AG04449 (cell line): ENCODE measurements at regions of chr2 and their contacts with region 1.

Region 1: GRCh38 chr2:234544659-234545611 is 48.1 kb upstream of the ARL4C start:
- DNase-seq: no peak
- H3K4me3 ChIP-seq: no peak overlapping the region
- CTCF ChIP-seq: peak; percentile 92

Region 2: GRCh38 chr2:233966388-233966787 is 578.5 kb before region 1 on chr2:
- CTCF ChIA-PET with region 1: interaction called, 164 read pairs
- POLR2A ChIA-PET with region 1: no interaction called
- DNase-seq: no peak
- H3K4me3 ChIP-seq: no peak overlapping the region
- CTCF ChIP-seq: no peak

Region 3: DNA sequence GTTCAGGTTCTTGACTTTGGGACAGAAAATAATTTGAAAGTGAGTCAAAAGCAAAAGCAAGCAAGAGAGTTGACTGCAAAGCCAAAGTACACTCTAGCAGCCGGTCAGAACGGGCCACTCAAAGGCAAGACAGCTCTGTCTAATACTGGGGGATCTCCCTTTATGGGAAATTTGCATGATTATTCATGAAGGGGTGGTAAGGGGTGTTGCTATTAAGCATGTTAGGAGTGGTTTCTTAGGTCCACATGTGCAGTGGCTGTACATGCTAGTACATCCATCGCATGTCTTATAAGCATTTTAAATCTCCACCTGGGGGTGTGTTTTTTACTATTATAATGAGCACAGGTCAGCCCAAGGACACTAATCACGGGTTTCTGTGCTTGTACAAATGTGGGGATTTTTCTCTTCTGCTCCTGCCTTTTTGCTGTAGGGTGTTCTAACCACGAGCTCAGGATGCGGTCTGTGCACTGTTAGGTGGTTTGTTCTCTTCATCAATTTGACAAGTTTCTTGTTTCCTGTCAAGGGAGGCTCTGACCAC is 554.6 kb before region 1 on chr2:
- CTCF ChIA-PET with region 1: interaction called, 58 read pairs
- POLR2A ChIA-PET with region 1: no interaction called
- DNase-seq: no peak
- H3K4me3 ChIP-seq: no peak overlapping the region
- CTCF ChIP-seq: no peak

Region 4: DNA sequence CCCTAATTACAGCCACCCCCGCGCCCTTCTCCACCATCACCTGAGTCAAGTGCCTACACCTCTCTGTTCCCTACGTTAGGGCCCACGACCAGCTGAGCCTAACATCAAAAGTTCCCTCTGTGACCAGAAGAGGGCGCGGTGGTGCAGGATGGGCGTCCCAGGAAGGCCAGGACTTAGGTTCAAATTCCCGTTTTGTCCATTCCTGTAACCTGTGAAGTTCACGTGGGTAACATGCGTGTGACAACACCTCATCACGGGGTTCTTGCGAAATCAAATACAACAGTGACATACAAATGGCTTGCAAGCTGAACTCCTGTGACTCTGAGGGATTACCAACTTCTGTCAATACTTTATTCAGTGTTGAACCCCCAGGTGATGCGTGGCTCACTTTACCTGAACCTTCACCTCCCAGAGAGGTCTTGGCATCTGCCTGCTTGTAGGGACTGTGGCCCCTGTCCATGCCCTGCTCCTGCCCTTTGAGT is 255.9 kb before region 1 on chr2:
- CTCF ChIA-PET with region 1: interaction called, 13 read pairs
- POLR2A ChIA-PET with region 1: no interaction called
- DNase-seq: no peak
- H3K4me3 ChIP-seq: no peak overlapping the region
- CTCF ChIP-seq: peak; percentile 74

Region 5: DNA sequence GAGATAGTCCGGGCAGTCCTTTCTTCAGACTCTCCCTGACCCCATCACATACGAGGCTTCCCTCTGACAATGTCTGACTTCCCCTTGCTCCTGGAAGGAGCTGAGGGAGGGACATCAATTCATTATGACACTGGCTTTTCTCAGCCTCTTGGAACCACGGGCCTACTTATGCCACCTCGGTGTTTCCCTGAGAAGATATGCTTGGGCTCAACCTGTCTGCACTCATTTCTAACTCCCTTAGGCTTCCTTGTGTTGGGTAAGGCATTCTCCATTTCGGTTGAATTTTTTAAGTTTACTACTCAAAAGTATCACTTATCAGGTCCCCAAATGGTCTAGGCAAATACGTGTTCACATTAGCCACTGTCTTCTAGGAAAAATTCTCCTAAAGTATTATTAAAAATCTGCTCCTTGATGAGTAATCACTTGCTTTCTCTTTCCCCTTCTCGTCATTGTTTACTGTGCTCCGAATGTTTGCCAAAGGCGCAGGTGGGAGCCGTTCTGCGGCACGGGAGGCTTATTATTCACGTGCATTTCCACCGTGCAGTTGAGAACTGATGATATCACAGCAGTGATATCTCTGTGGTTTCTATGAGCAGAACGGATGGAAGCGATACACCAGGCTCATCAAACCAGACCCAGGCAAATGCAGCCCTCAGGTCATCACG is 81.2 kb before region 1 on chr2:
- CTCF ChIA-PET with region 1: no interaction called
- POLR2A ChIA-PET with region 1: no interaction called
- DNase-seq: no peak
- H3K4me3 ChIP-seq: no peak overlapping the region
- CTCF ChIP-seq: no peak

Region 6: DNA sequence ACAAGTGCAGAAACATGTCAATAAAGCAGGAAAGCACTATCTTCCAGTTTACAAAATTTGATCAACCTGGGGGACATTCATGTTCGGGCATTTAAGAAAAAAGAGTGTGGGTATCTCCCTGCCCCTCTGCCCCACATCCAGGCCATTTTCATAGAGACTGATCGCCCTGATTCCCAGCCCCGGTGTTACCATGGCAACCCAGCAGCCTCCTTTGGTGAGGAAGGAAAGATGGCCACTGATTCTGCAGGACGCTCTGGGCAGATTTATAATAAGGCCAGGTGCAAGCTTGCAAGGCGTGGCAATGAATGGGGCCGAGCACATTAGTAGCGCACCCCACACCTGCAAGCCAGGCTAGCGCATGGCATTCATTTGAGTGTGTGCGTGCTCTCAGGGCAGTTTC is 11.3 kb before region 1 on chr2:
- CTCF ChIA-PET with region 1: interaction called, 45 read pairs
- POLR2A ChIA-PET with region 1: no interaction called
- DNase-seq: no peak
- H3K4me3 ChIP-seq: no peak overlapping the region
- CTCF ChIP-seq: no peak

Region 7: DNA sequence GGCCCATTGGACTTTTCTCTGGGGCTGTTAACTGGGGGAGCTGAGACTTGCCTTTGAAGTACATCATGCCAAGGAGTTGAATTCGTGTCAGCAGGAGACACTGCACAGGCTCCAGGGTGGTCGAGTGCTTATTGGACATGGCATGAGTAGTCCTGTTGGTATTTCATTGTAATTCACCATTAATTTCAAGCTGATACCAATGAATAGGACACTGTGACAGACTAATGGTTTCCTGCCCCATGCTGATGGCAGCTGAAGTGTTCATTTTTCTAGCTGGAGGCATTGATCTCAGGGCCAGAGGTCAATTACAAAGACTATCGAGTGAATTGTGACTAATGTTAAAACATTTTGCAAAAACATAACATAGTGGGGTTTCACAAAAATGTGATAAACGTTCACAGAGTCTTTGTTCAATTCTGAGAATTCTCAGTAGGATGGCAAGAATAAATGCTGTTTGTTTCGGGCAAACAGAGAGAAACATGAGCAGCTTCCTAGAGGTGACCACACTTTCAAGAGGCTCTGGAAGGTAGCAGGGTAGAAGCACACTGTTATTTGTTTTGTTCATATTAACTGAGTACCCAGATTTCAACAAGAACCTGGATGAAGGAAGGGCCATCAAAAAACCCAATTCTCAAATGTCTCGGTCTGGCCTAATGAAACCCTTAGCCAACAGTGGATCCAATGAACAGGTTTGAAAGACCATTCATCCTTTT is 42.6 kb after region 1 on chr2:
- CTCF ChIA-PET with region 1: no interaction called
- POLR2A ChIA-PET with region 1: no interaction called
- DNase-seq: no peak
- H3K4me3 ChIP-seq: no peak overlapping the region
- CTCF ChIP-seq: no peak

Region 8: GRCh38 chr2:234643407-234643806 is 98.5 kb after region 1 on chr2:
- CTCF ChIA-PET with region 1: no interaction called
- POLR2A ChIA-PET with region 1: no interaction called
- DNase-seq: no peak
- H3K4me3 ChIP-seq: no peak overlapping the region
- CTCF ChIP-seq: no peak

Region 9: GRCh38 chr2:235098736-235099494 is 554.0 kb after region 1 on chr2:
- CTCF ChIA-PET with region 1: interaction called, 14 read pairs
- POLR2A ChIA-PET with region 1: no interaction called
- DNase-seq: peak; percentile 26
- H3K4me3 ChIP-seq: no peak overlapping the region
- CTCF ChIP-seq: no peak